ENCODE measurements at regions of chr15 and their contacts with region 1.

Region 1: DNA sequence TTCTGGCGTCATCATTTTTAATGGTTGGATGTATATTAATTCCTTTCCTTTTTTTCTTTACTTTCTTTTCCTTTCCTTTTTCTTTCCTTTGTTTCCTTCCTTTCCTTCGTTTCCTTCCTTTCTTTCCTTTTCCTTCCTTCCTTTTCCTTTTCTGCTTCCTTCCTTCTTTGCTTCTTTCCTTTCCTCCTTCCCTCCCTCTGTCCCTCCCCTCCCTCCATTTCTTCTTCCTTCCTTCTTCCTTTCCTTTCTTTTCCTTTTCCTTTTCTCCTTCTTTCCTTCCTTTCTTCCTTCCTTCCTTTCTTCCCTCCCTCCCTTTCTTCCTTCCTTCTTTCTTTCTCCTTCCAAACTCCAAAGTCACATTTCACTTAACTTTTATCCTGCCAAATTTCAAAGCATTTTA is 54.9 kb upstream of the LYSMD4 start:
- DNase-seq: no peak
- ATAC-seq: no peak
- H3K4me3 ChIP-seq: no peak overlapping the region
- H3K27ac ChIP-seq: no peak overlapping the region
- H3K4me1 ChIP-seq: peaks cover 47% of the 10 kb centered on the region
- H3K27me3 ChIP-seq: no peaks in the 10 kb centered on the region
- CTCF ChIP-seq: no peak
- EP300 ChIP-seq: no peak
- POLR2A ChIP-seq: no peak
- RAD21 ChIP-seq: no peak

Region 2: DNA sequence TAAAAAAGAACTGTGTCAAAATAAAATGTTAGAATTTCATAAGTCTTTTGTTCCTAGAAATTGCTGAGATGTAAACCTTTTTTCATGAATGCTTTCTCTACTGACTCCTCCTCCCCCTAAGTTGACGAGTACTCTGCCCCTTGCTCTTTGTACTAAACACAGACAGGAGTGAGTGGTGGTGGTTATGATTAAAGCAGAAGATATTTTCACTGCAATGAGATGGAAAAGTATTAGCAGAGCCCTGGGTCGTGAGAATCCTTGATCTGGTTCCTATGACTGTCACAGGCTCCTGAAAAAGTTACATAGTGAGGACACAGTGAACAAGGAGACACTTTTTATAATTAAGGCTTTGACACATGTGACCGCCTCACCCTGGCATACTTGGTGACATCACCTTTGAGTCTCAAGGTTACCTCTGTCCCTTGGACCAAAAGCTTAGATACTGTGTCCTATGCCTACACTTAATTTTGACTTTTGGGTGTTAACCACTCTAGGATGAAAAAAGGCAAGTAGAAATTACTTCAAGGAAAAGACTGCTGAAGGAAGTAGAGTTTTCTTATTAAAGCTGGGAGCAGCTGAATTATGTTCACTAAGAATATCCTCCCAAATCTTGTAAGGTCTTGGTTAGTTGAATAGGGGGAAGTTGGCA is 75.5 kb after region 1 on chr15:
- CTCF ChIA-PET with region 1: no interaction called
- POLR2A ChIA-PET with region 1: no interaction called
- in situ Hi-C with region 1: no loop called
- intact Hi-C with region 1: loop called (anchors 5 kb)
- DNase-seq: peak; percentile 43
- ATAC-seq: peak; percentile 90
- H3K4me3 ChIP-seq: no peak overlapping the region
- H3K27ac ChIP-seq: no peak overlapping the region
- H3K4me1 ChIP-seq: peaks cover 13% of the 10 kb centered on the region
- H3K27me3 ChIP-seq: no peaks in the 10 kb centered on the region; a peak in 1 of 5 replicates
- CTCF ChIP-seq: no peak
- EP300 ChIP-seq: no peak
- POLR2A ChIP-seq: no peak
- RAD21 ChIP-seq: no peak

Region 3: DNA sequence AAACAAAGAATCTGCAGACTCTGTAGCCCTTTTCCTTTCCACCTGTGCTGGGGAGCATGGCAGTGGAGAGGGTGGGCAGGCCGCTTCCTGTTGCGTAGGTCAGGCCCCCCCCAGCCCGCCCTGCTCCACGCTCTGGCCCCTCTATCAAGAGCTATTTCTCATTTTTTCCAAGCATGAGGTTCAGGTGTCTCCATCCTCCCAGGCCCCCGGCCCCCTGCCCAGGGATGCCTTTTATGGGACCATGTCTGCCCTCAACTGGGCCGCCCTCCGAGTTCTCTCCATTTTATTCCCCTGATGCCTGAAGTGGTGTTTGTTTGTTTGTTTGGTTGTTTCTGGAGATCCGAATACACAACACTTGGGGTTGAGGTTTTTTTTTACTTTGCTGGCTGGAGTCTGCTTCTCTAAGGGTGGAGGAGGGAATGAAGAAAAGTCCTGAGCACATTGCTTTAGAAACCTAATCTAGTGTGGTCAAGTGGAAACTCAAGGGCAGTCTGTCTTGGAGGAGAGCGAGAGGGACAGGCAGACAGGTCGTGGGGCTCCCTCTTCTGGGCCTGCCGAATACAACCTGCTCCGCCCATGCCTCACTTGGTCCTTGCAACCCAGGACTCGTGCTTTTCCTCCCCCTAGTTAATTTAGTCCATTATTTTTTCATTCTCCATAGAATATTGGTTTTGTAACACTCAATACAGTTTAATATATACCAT is 121.6 kb after region 1 on chr15:
- CTCF ChIA-PET with region 1: interaction called, 9 read pairs
- POLR2A ChIA-PET with region 1: no interaction called
- in situ Hi-C with region 1: no loop called
- intact Hi-C with region 1: loop called (anchors 1 kb)
- DNase-seq: peak; percentile 9
- ATAC-seq: peak; percentile 86
- H3K4me3 ChIP-seq: no peak overlapping the region
- H3K27ac ChIP-seq: no peak overlapping the region
- H3K4me1 ChIP-seq: no peaks in the 10 kb centered on the region
- H3K27me3 ChIP-seq: no peaks in the 10 kb centered on the region
- CTCF ChIP-seq: peak; percentile 60
- EP300 ChIP-seq: no peak
- POLR2A ChIP-seq: no peak
- RAD21 ChIP-seq: peak; percentile 27; the same call in 1 of the 2 replicates

Region 4: GRCh38 chr15:100020189-100020588 is 232.0 kb after region 1 on chr15:
- CTCF ChIA-PET with region 1: no interaction called
- POLR2A ChIA-PET with region 1: no interaction called
- in situ Hi-C with region 1: no loop called
- intact Hi-C with region 1: no loop called
- DNase-seq: no peak
- ATAC-seq: peak; percentile 35; the same call in 2 of the 3 replicates
- H3K4me3 ChIP-seq: no peak overlapping the region
- H3K27ac ChIP-seq: no peak overlapping the region
- H3K4me1 ChIP-seq: no peaks in the 10 kb centered on the region
- H3K27me3 ChIP-seq: peaks cover 0 to 1% of the 10 kb centered on the region in 2 experiments; a peak in 1 of 5 replicates
- CTCF ChIP-seq: no peak
- EP300 ChIP-seq: no peak
- POLR2A ChIP-seq: no peak
- RAD21 ChIP-seq: no peak

Measured in HepG2 (cell line).